ENCODE measurements at regions of chr14 and their contacts with region 1.

Region 1: DNA sequence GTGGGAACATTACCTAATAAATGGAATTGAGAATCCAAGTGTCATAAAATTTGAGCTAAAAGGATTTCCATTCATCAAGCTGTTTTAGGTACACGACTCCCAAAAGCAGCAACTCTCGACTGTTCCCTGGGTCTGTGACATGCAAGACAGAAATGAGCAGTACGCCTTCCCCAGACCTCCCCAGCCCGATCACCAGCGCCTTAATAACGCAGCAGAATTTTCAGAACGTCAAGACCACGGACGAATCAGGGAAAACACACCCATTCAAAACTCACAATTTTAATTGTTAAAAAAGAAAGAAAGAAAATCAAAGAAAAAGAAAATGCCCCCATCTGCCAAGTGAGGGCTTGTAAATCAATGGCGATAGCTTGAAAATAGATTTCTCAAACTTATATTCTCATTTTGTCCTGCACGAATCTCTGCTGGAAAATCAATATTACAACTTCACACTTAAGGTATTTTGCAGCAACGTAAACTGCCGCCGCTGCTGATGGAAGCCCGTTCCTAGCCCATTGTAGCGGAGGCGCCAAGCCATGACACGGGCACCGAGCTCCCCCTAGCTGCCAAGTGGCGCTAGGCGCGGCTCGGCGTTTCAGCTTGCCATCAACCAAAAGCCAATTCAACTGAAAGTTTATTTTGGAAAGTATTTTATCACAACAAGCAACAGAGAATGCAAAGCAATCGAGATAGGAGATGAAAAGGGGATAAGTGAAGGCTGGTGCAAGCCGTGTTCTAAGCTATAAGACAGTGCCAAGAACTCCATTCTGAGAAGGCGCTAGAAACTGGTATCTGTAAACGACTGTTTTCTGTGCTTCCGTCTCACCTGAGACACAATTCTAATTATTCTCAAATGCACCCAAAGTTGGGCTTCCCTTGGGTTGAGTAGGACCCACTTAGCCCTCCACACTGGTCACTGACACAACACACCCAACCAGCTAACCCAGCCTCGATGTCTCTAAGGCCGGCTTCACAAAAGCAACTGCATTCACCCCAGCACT is 5.5 kb downstream of the BCL11B start:
- DNase-seq: peak; percentile 94
- ATAC-seq: peak; percentile 38
- H3K4me3 Mint-ChIP-seq: peak overlapping the region; percentile 87
- H3K27ac Mint-ChIP-seq: peak overlapping the region; percentile 99
- H3K4me1 Mint-ChIP-seq: peaks cover 37% of the 10 kb centered on the region
- H3K27me3 Mint-ChIP-seq: no peaks in the 10 kb centered on the region

Region 2: GRCh38 chr14:98173305-98173704 is 1093.2 kb before region 1 on chr14:
- CTCF ChIA-PET with region 1: interaction called, 4 read pairs
- POLR2A ChIA-PET with region 1: interaction called, 3 read pairs
- intact Hi-C with region 1: loop called in 1 of 2 experiments (anchors 2 kb)
- DNase-seq: peak; percentile 70
- ATAC-seq: no peak
- H3K4me3 Mint-ChIP-seq: peak overlapping the region; percentile 50
- H3K27ac Mint-ChIP-seq: peak overlapping the region; percentile 99
- H3K4me1 Mint-ChIP-seq: peaks cover 99% of the 10 kb centered on the region
- H3K27me3 Mint-ChIP-seq: no peaks in the 10 kb centered on the region

Region 3: DNA sequence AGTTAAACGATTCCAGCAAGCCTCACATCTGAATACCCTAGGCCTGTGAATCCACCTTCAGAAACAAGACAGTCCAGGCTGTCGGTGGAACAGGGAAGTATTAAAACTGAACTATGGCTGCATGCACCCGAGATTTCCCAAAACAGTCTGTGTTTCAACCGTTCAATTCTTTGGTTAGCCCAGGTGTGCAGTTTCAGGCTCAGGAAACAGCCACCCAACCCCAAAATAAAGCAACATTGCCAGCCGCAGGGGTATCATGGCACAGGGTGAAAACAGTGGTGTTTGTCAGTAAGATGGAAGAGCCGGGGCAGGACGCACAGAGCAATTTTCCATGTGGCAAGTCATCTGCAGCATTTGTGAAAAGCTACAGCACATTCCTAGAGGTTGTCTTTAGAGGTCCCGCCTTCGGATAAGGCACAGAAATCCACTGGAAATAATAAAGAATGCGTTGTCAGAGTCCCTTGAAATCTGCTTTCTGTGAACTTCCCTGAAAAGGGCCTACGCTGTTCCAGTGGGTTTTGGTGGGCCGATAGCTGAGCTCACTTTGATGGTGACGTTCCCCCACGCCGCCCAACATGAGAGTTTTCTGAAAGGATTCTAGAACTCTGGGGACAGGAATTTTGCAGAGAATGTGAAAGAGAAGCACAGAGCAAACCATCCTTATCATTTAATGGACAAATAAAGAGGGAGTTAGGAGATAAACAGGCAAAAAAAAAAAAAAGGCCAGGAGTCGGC is 79.4 kb before region 1 on chr14:
- CTCF ChIA-PET with region 1: interaction called, 12 read pairs
- POLR2A ChIA-PET with region 1: interaction called, 10 read pairs
- intact Hi-C with region 1: loop called (anchors 1 to 2 kb)
- DNase-seq: peak; percentile 33
- ATAC-seq: no peak
- H3K4me3 Mint-ChIP-seq: peak overlapping the region; percentile 67
- H3K27ac Mint-ChIP-seq: peak overlapping the region; percentile 96
- H3K4me1 Mint-ChIP-seq: peaks cover 91% of the 10 kb centered on the region
- H3K27me3 Mint-ChIP-seq: no peaks in the 10 kb centered on the region

Region 4: GRCh38 chr14:99215277-99215676 is 51.2 kb before region 1 on chr14:
- CTCF ChIA-PET with region 1: interaction called, 15 read pairs
- POLR2A ChIA-PET with region 1: interaction called, 4 read pairs
- intact Hi-C with region 1: no loop called
- DNase-seq: no peak
- ATAC-seq: no peak
- H3K4me3 Mint-ChIP-seq: peak overlapping the region; percentile 57
- H3K27ac Mint-ChIP-seq: peak overlapping the region; percentile 79
- H3K4me1 Mint-ChIP-seq: peaks cover 95% of the 10 kb centered on the region
- H3K27me3 Mint-ChIP-seq: no peaks in the 10 kb centered on the region

Region 5: DNA sequence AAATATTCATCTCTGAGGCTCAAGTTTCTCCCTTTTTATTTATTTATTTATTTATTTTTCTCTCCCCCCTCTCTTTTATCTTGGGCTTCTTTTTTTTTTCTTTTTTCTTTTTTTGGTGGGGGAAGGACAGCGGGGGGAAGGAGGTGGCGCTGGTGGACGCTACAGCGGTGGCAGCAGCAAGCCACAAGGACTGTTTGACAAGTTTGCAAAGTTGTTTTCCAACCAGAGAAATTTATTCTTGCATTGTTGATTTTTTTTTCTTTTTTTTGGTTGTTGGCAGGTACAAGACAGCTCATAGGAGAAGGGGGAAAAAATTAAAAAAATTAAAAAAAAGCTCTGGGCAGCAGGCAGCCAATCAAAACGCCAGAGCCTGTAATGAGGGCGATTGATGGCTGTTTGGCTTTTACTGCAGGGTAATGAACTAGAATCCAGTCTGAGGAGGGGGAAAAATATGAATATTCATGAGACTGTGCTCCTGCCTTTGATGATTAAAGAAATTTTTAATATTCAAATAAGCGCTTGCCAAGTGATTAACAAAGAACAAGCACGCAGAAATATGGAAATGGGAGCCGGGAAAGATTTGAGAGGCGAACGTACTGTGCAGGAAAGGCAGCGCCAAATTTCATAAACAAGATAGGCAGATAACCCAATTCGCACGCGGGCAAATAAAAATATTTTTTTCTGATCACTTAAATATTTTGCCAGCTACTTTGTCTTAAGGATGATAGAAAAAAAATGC is 30.7 kb before region 1 on chr14:
- CTCF ChIA-PET with region 1: interaction called, 19 read pairs
- POLR2A ChIA-PET with region 1: interaction called, 9 read pairs
- intact Hi-C with region 1: loop called (anchors 1 to 2 kb)
- DNase-seq: no peak
- ATAC-seq: no peak
- H3K4me3 Mint-ChIP-seq: peak overlapping the region; percentile 67
- H3K27ac Mint-ChIP-seq: peak overlapping the region; percentile 93
- H3K4me1 Mint-ChIP-seq: peaks cover 93% of the 10 kb centered on the region
- H3K27me3 Mint-ChIP-seq: no peaks in the 10 kb centered on the region

Region 6: DNA sequence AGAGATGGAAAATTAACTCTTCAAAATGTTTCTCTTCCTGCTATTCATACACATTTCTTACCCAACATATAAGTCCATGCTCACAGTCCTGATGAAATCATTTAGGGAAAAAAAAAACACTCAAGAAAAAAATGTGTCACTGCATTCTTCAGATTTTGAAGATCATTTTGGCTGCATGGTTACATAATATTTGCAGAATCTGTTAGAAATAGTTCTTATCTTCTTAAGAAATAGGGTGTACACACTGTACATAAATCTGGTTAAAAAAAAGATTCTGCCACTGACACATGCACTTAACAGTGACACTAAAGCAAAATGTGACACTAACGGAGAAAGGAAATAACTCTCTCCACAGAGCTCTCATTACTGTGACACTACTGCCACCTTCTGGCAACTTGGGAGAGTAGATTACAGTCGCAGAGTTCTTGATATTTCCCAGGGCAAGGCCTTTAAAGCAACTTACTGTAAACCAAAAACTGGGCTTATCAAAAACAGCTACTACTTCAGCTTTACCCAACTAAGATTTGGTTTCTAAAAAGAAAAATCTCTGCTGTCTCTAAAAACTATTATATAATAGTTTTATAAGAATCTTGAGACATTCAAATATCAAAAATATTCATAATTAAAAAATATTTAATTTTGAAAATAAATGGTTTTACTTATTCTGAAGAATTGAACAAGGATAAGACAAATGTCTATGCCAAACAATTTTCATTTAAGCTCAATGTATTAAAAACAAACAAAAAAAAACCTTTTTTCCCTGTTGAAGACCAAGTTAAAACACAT is 149.2 kb after region 1 on chr14:
- CTCF ChIA-PET with region 1: interaction called, 4 read pairs
- POLR2A ChIA-PET with region 1: interaction called, 3 read pairs
- intact Hi-C with region 1: loop called (anchors 2 to 5 kb)
- DNase-seq: peak; percentile 74
- ATAC-seq: peak; percentile 95
- H3K4me3 Mint-ChIP-seq: no peak overlapping the region
- H3K27ac Mint-ChIP-seq: peak overlapping the region; percentile 23
- H3K4me1 Mint-ChIP-seq: peaks cover 31% of the 10 kb centered on the region
- H3K27me3 Mint-ChIP-seq: no peaks in the 10 kb centered on the region

Measured in activated CD4-positive, alpha-beta T cell treated with anti-CD3 and anti-CD28 coated beads for 36 hours (primary cell).